HEK293 (cell line): ENCODE measurements at regions of chr7 and their contacts with region 1.

Region 1: DNA sequence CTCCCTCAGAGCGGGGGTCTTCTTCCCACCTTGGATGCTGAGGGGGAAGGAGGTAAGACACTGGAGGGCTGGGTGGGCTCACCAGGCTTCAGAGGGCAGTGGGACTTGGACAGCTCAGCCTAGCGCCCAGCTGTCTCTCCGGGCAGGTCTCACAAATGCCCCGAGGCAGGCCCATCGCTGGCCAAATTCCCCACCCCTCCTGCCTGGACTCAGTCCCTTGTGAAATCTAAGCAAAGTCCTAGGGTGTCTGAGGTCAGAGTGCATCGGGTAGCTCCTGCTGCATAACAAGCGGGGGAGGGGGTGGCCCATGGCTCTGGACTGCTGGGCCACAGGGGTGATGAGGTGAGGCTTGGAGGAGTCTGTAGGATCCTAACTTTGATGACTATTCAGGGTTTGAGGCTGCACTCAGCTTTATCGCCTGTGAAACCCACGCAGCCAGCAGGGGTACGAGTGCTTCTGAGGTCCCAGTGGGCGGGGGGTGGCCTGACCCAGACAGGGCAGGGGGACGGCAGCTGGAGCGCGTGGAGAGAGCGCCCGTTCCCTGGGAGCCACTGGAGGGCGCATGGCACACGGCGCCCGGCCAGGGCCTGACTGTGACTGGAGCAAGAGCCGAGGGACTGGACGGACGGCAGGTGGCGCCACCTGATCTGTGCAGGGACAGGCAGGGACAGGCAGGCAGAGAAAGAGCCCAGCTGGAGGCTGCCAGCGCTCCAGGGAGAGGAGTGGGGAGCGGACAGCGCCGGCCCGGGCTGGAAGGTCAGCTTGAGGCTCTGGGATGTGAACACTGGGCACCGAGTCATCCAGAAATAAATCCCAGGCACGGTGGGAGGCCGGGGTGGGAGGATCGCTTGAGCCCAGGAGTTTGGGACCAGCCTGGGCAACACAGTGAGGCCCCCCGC is 10.0 kb downstream of the CYP2W1 start:
- H3K4me3 ChIP-seq: no peak overlapping the region
- H3K27ac ChIP-seq: no peak overlapping the region
- H3K4me1 ChIP-seq: no peaks in the 10 kb centered on the region; the same call in 1 of the 2 replicates
- CTCF ChIP-seq: peak; percentile 100

Region 2: GRCh38 chr7:974820-975681 is 17.9 kb before region 1 on chr7 and contains the start of gene COX19:
- CTCF ChIA-PET with region 1: interaction called, 25 read pairs
- POLR2A ChIA-PET with region 1: no interaction called
- H3K4me3 ChIP-seq: peak within 1 kb of the TSS; percentile 100
- H3K27ac ChIP-seq: peak within 1 kb of the TSS; percentile 85
- H3K4me1 ChIP-seq: no peaks in the 10 kb centered on the region
- CTCF ChIP-seq: no peak

Region 3: DNA sequence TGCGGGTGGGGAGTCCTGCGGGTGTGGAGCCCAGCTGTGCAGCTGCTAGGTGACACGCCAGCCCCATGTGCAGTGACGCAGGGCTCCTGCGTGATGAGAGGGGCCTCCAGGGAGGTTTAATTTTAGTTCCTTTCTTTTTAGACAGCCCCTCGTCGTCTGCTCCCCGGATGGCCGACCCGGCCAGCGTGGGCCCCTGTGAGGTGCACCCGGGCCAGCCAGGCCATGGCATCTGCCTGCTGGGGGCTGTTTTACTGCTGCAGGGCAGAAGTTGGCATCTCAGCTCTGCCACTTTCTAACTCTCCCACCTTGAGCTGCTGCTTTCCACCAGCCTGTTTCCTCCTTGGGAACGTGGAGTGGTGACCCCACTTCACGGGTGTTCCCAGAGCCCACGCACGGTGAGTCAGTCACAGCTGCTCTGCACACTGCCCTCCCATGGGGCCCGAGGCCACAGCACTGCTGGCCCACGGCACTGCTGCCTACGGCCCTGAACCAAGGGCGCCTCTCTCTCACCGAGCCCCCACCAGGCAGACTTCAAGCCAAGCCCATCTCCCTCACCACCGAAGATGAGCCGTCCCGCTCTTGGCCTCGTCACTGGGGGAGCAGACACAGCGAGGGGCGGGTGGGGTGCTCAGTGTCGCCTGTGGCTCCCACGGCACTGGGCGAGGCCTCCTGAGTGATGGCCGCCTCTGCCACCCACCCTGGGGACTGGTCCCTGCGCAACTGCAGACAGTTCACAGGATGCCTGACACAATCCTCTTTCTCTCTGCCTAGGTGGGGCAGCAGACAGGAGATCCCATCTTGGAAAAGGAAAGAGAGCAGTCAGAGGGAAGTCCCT is 11.3 kb after region 1 on chr7:
- CTCF ChIA-PET with region 1: interaction called, 11 read pairs
- POLR2A ChIA-PET with region 1: no interaction called
- H3K4me3 ChIP-seq: no peak overlapping the region
- H3K27ac ChIP-seq: no peak overlapping the region
- H3K4me1 ChIP-seq: no peaks in the 10 kb centered on the region
- CTCF ChIP-seq: no peak

Region 4: DNA sequence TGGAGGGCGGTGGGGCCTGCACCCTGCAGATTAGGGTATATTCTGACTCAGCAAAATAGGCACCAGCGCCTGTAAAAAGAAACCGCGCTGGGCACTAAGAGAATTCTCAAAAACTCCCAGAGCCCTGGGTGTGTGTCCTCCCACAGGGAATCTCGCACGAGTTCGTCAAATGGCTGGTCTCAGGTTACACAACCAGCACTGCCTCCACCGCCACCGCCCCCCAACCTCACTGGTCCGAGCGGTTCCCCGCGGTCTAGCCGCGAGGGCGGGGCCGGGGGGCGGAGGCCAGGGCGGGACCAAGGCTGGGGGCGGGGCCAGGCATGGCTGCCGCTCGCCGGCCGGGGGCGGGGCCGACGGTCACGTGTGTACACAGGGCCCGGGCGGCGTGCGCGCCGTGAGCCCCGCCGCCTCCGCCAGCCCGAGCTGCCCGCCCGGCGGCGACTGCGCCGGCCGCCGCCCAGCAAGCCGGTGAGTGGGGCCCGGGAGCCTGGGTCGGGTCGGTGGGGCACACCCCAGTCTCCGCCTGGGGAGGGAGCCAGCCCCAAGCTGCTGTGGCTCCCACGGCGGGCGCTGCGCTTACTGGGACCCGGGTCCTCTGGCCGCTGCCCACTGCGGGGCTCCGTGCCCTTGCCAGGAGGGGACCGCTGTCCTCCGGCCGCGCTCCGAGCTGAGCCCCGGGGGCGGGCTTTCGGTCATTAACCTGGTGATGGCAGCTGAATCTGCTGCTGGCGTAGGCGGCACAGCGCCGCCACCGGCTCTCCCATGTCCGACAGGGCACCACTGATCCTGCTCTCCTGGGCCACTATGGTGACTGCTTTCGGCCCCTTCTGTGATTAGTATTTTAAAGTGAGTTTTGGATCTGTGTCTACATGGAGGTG is 51.5 kb after region 1 on chr7 and contains the start of gene GPR146:
- CTCF ChIA-PET with region 1: interaction called, 19 read pairs
- POLR2A ChIA-PET with region 1: no interaction called
- H3K4me3 ChIP-seq: peak within 1 kb of the TSS; percentile 61
- H3K27ac ChIP-seq: peak within 1 kb of the TSS; percentile 63
- H3K4me1 ChIP-seq: peaks cover 8% of the 10 kb centered on the region
- CTCF ChIP-seq: peak; percentile 79

Region 5: GRCh38 chr7:1059200-1060091 is 66.5 kb after region 1 on chr7:
- CTCF ChIA-PET with region 1: interaction called, 149 read pairs
- POLR2A ChIA-PET with region 1: no interaction called
- H3K4me3 ChIP-seq: no peak overlapping the region
- H3K27ac ChIP-seq: no peak overlapping the region
- H3K4me1 ChIP-seq: no peaks in the 10 kb centered on the region
- CTCF ChIP-seq: no peak

Region 6: DNA sequence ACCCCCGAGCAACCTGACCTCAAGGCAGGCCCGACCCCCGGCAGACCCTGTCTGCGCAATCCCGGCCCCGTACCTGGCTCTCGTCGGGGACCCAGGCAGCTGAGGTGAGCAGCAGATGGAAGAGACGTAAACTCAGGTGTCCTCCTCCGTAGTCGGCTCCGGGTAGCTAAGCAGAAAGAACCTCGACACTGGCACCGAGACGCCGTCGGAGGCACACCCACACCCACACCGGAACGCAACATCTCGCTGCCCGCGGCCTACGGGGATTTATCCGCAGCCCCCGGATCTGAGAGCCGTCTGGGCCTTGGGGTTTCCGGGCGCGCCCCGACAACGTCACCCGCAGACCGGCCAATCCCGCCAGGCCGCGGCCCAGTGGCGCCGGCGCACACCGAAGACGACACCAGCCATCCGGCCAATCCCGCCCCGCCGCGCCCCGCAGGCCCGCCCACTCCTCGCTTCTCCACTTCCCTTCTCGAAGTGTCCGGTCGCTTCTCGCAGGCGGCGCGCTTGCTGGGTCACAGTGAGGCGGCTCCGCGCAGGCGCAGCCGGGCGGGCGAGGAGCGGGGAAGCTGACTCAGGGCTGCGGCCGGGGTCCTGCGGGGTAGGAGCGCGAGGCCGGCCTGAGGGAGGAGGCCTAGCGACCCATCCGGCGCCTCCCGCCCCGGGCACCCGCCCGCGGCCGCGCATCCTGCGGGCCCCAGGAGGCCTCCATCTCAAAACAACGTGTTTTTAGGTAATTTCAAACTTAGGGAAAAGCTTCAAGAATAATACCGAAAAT is 167.1 kb after region 1 on chr7 and contains the start of gene ZFAND2A:
- CTCF ChIA-PET with region 1: interaction called, 11 read pairs
- POLR2A ChIA-PET with region 1: interaction called, 3 read pairs
- H3K4me3 ChIP-seq: peak within 1 kb of the TSS; percentile 96
- H3K27ac ChIP-seq: peak within 1 kb of the TSS; percentile 94
- H3K4me1 ChIP-seq: 0 out of 2 replicates have a peak, but pooled peaks cover 2% of the 10 kb centered on the region
- CTCF ChIP-seq: no peak

Region 7: DNA sequence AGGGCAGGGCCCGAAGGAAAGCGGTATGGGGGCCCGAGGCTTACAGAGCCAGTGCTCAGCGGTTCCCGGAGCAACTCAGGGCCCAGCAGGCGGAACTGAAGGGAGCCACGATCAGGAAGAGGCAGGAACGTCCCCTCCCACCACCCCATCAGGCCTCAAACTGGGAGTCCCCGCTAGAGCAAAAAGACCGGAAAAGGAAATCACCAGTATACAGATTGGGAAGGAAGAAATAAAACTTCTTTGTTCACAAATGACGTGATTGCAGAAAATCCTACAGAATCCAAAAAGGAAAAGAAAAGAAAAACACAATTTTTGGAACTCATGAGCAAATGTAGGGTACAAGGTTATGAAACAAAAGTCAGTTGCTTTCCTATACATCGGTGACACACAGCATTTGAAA is 188.7 kb after region 1 on chr7:
- CTCF ChIA-PET with region 1: interaction called, 106 read pairs
- POLR2A ChIA-PET with region 1: interaction called, 3 read pairs
- H3K4me3 ChIP-seq: no peak overlapping the region
- H3K27ac ChIP-seq: no peak overlapping the region
- H3K4me1 ChIP-seq: no peaks in the 10 kb centered on the region
- CTCF ChIP-seq: no peak